CD8-positive, alpha-beta memory T cell (primary cell): ENCODE measurements at regions of chr9 and their contacts with region 1.

Region 1: DNA sequence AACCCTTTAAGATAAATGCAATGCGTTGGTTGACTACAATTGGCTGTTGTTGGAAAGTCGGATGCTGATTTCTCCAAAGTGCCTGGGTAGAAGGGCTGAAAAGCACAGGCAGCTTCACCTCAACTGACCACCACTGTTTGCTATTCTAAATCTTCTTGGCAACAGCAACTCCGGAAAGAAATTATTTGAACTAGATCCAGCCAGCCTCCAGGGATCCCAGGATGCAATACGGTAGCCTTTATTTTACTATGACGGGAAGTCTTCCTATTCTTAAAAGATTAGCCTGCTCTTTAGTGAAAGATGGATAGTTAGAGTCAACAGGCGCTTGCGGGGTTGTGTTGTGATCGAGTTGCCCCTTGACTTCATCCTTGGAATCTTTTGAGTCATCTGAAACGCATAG is 78.6 kb upstream of the KLF9 start:
- DNase-seq: no peak
- H3K4me3 ChIP-seq: no peak overlapping the region
- H3K4me3 Mint-ChIP-seq: no peak overlapping the region
- H3K27ac ChIP-seq: no peak overlapping the region
- H3K27ac Mint-ChIP-seq: no peak overlapping the region
- H3K4me1 ChIP-seq: peaks cover 5% of the 10 kb centered on the region
- H3K4me1 Mint-ChIP-seq: peaks cover 12 to 22% (median 21%) of the 10 kb centered on the region in 3 donors
- H3K27me3 ChIP-seq: no peaks in the 10 kb centered on the region
- H3K27me3 Mint-ChIP-seq: peaks cover 0 to 4% of the 10 kb centered on the region in 2 donors

Region 2: DNA sequence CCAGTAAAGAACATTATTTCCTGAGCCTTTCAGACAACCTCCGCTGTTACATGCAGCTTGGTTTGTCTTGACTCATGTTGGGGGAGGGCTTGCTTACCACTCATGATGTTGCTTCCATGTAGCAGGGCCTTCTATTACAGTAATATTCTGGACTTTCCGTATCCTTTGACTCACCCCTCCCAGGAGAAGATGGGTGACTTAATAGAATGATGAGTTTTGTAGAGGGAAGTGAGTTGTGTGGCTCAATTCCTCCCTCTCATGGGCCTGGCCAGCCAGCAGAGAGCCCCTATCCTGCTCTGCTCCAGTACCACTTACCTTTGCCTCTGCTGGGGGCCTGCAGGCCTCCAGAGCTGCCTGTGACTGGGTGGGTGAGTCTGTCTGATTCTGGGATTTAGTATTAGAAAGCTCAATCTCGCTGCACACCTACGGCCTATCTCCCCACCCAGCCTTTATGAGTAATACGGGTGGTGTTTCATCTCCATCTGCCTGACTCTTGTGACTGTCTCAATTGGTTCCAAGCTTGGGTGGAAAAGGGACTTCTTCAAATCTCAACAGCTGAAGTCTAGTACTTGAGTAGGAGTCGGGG is 26.0 kb before region 1 on chr9:
- CTCF ChIA-PET with region 1: no interaction called
- POLR2A ChIA-PET with region 1: interaction called, 10 read pairs
- DNase-seq: no peak
- H3K4me3 ChIP-seq: no peak overlapping the region
- H3K4me3 Mint-ChIP-seq: no peak overlapping the region
- H3K27ac ChIP-seq: no peak overlapping the region
- H3K27ac Mint-ChIP-seq: no peak overlapping the region
- H3K4me1 ChIP-seq: peaks cover 21% of the 10 kb centered on the region
- H3K4me1 Mint-ChIP-seq: peaks cover 15 to 32% (median 26%) of the 10 kb centered on the region in 3 donors
- H3K27me3 ChIP-seq: no peaks in the 10 kb centered on the region
- H3K27me3 Mint-ChIP-seq: no peaks in the 10 kb centered on the region